Panc1 (cell line): ENCODE measurements at regions of chr11 and their contacts with region 1.

Region 1: DNA sequence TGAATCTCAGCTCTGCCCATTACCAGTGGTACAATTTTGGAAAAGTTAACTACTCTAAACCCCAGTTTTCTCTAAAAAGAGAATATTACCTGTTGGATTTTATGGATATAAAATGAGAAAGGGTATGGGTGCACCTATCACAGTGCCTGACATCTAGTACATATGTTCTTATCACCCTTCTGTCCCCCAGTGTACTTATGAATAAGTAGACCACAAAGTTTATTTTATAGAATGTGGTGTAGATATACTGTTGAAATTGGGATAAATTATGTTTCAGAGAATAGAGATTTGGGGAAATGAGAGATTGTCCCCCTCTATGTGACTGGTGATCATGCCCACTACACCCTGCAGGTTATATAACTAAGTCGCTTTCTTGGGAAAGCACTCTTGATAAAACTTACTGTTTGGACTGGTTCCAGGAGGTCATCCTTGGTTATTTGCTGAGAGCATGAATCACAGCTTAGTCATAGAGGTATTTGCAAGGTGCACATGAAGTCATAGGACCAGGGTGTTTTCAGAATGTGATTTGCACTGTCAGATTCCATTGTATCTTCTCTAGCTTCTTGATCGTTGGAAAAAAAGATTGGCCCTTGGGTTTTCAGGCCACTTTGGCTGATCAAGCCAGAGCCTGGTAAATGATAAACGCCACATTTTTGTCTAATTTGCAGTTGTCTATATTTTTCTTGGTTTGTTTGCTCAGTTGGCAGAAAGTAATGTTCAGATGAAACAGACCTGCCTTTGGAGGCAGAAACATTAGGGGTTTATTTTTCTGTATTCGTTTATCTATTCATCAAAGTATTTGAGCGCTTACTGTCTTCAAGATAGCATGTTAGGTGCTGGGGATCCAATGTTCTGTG is 21.3 kb downstream of the STX3 start:
- DNase-seq: peak; percentile 81
- ATAC-seq: peak; percentile 93
- H3K4me3 ChIP-seq: no peak overlapping the region
- H3K27ac ChIP-seq: peak overlapping the region; percentile 31; the same call in 1 of the 2 replicates
- H3K4me1 ChIP-seq: peaks cover 21% of the 10 kb centered on the region
- H3K27me3 ChIP-seq: no peaks in the 10 kb centered on the region
- CTCF ChIP-seq: no peak

Region 2: DNA sequence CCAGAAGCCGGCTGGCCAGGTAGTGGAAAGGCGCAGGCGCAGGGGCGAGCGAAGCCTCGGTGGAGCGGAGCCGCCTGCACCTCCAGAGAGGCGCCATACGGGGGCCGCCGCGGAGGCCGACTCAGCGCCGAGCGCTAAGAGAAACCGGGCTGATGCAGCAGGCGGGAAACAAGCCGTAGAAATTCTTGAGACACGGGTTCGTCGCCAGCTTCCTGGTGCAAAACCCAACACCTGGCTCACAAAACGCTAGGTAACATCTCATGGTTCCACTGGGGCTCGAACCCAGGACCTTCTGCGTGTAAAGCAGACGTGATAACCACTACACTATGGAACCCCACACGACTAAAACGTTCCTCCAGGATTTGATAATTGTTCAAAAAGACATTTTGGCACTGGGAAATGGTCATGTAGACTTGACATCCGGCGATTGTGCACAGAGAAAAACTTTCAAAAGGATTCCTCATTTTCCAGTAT is 226.0 kb before region 1 on chr11:
- CTCF ChIA-PET with region 1: no interaction called
- POLR2A ChIA-PET with region 1: no interaction called
- in situ Hi-C with region 1: no loop called
- intact Hi-C with region 1: loop called (anchors 10 kb)
- DNase-seq: peak; percentile 97
- ATAC-seq: peak; percentile 90
- H3K4me3 ChIP-seq: peak overlapping the region; percentile 89 to 95
- H3K27ac ChIP-seq: peak overlapping the region; percentile 94
- H3K4me1 ChIP-seq: peaks cover 18% of the 10 kb centered on the region
- H3K27me3 ChIP-seq: no peaks in the 10 kb centered on the region
- CTCF ChIP-seq: peak; percentile 67

Region 3: GRCh38 chr11:59833602-59834001 is 57.2 kb after region 1 on chr11:
- CTCF ChIA-PET with region 1: no interaction called
- POLR2A ChIA-PET with region 1: no interaction called
- in situ Hi-C with region 1: no loop called
- intact Hi-C with region 1: no loop called
- DNase-seq: no peak
- ATAC-seq: no peak
- H3K4me3 ChIP-seq: no peak overlapping the region
- H3K27ac ChIP-seq: no peak overlapping the region
- H3K4me1 ChIP-seq: no peaks in the 10 kb centered on the region
- H3K27me3 ChIP-seq: no peaks in the 10 kb centered on the region; the same call in 1 of the 2 replicates
- CTCF ChIP-seq: no peak